ENCODE measurements at regions of chr5 and their contacts with region 1.

Region 1: DNA sequence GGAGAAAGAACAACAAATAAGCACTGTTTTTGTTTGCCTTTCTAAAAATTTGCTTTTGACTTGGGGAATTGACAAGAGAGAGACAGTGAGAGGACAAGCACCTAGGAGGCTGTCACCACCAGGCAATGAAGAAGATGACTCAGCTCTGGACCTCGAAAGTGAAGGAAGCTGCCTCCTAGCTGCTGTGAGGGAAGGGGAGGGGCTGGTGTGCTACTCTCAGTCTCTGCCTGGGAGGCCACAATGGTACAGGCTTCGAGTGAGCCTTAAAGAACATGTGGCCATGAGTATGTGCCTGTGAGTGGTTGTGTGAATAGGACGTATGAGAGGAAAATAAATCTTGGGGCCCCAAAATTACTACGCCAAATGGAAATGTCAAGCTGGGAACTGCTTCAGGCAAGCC is 7.1 kb upstream of the PLK2 start:
- DNase-seq: peak in 1 of 35 experiments; percentile 12
- ATAC-seq: peak in 3 of 4 experiments; percentile 26 to 56 (median 50)
- H3K4me3 ChIP-seq: no peak overlapping the region
- H3K4me3 Mint-ChIP-seq: no peak overlapping the region
- H3K27ac ChIP-seq: no peak overlapping the region
- H3K27ac Mint-ChIP-seq: no peak overlapping the region
- H3K4me1 ChIP-seq: no peaks in the 10 kb centered on the region
- H3K4me1 Mint-ChIP-seq: peaks cover 0 to 2% (median 0%) of the 10 kb centered on the region in 3 donors
- H3K27me3 ChIP-seq: no peaks in the 10 kb centered on the region
- H3K27me3 Mint-ChIP-seq: no peaks in the 10 kb centered on the region

Region 2: GRCh38 chr5:57298295-57298984 is 1168.5 kb before region 1 on chr5:
- CTCF ChIA-PET with region 1: interaction called, 18 to 52 read pairs
- POLR2A ChIA-PET with region 1: interaction called in 1 of 2 experiments, 15 read pairs
- DNase-seq: peak; percentile 59 to 94 (median 81)
- ATAC-seq: peak; percentile 66 to 87 (median 74)
- H3K4me3 ChIP-seq: peak overlapping the region; percentile 29 to 41
- H3K4me3 Mint-ChIP-seq: peak overlapping the region; percentile 66 to 73 (median 73)
- H3K27ac ChIP-seq: peak overlapping the region; percentile 30
- H3K27ac Mint-ChIP-seq: peak overlapping the region in 1 of 2 donors; percentile 68
- H3K4me1 ChIP-seq: peaks cover 7 to 12% of the 10 kb centered on the region in 2 experiments
- H3K4me1 Mint-ChIP-seq: peaks cover 10 to 21% (median 19%) of the 10 kb centered on the region in 3 donors
- H3K27me3 ChIP-seq: no peaks in the 10 kb centered on the region
- H3K27me3 Mint-ChIP-seq: no peaks in the 10 kb centered on the region

Region 3: GRCh38 chr5:58606064-58606463 is 139.1 kb after region 1 on chr5:
- CTCF ChIA-PET with region 1: no interaction called
- POLR2A ChIA-PET with region 1: no interaction called
- DNase-seq: no peak
- ATAC-seq: no peak
- H3K4me3 ChIP-seq: no peak overlapping the region
- H3K4me3 Mint-ChIP-seq: no peak overlapping the region
- H3K27ac ChIP-seq: no peak overlapping the region
- H3K27ac Mint-ChIP-seq: no peak overlapping the region
- H3K4me1 ChIP-seq: no peaks in the 10 kb centered on the region
- H3K4me1 Mint-ChIP-seq: no peaks in the 10 kb centered on the region
- H3K27me3 ChIP-seq: peaks cover 0 to 7% of the 10 kb centered on the region in 2 experiments
- H3K27me3 Mint-ChIP-seq: peaks cover 0 to 4% of the 10 kb centered on the region in 2 donors

Measured in T-cell (primary cell).